Esophagus squamous epithelium (tissue), 5 donors: ENCODE measurements at regions of chr6 and their contacts with region 1.

Region 1: GRCh38 chr6:158072083-158072721 is 90.5 kb downstream of the SYNJ2 start:
- DNase-seq: no peak
- H3K4me3 ChIP-seq: no peak overlapping the region
- H3K27ac ChIP-seq: peak overlapping the region in 2 of 4 donors; percentile 8 to 16
- H3K4me1 ChIP-seq: peaks cover 17 to 42% (median 23%) of the 10 kb centered on the region in 3 donors
- H3K27me3 ChIP-seq: no peaks in the 10 kb centered on the region
- CTCF ChIP-seq: peak; percentile 76 to 89 (median 85)
- POLR2A ChIP-seq: no peak

Region 2: DNA sequence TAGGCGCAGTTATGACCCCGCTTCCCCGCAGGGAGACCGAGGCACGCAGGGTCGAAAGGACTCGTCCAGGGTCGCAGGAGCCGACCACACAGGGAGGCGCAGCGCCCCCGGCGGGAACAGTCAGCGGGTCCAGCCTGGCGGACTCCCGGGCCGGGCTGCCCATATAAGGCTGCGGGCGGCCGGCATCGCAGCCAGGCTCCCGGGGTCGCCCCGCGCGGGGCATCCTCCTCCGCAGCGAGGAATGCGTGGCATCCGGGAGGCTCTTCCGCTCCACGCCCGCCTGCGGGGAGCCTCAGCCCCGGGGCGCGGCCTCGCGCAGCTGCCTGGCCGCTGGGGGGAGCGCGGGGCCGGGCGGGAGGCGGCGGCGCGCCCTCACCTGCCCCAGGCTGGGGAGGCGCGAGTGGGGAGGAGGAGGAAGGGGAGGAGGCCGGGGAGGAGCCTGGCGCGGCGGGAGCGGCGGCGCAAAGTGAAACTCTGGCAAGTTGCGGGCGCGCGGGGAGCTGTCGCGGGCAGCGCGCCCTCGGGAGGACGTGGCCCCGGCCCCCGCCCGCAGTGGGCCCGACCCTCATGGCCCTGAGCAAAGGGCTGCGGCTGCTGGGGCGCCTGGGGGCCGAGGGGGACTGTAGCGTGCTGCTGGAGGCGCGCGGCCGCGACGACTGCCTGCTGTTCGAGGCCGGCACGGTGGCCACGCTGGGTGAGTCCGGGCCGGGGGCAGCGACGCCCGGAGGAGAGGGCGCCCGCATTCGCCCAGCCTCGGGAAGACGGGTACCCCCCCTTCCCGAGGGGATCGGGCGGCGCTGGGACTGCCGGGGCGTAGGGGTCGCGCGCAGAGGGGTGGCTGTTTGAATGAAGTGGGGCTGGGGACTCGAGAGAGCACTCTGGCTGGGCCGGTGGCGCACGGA is 90.6 kb before region 1 on chr6 and contains the start of gene SYNJ2:
- intact Hi-C with region 1: loop called (anchors 5 kb)
- DNase-seq: peak; percentile 20
- H3K4me3 ChIP-seq: peak within 1 kb of the TSS; percentile 80 to 99 (median 94)
- H3K27ac ChIP-seq: peak within 1 kb of the TSS; percentile 84 to 91 (median 88)
- H3K4me1 ChIP-seq: peaks cover 18 to 55% (median 30%) of the 10 kb centered on the region in 3 donors
- H3K27me3 ChIP-seq: peaks cover 0 to 6% (median 0%) of the 10 kb centered on the region in 4 donors
- CTCF ChIP-seq: peak in 5 of 6 experiments; percentile 39 to 77 (median 60)
- POLR2A ChIP-seq: peak in 2 of 4 donors; percentile 69 to 86
- total RNA-seq, gene SYNJ2: 6.6 to 15.6 (median 9.8) TPM

Region 3: GRCh38 chr6:158270389-158271127 is 198.4 kb after region 1 on chr6:
- intact Hi-C with region 1: no loop called
- DNase-seq: no peak
- H3K4me3 ChIP-seq: no peak overlapping the region
- H3K27ac ChIP-seq: no peak overlapping the region
- H3K4me1 ChIP-seq: peaks cover 0 to 8% (median 6%) of the 10 kb centered on the region in 3 donors
- H3K27me3 ChIP-seq: no peaks in the 10 kb centered on the region
- CTCF ChIP-seq: no peak
- POLR2A ChIP-seq: no peak